ENCODE measurements at regions of chr15 and their contacts with region 1.

Region 1: DNA sequence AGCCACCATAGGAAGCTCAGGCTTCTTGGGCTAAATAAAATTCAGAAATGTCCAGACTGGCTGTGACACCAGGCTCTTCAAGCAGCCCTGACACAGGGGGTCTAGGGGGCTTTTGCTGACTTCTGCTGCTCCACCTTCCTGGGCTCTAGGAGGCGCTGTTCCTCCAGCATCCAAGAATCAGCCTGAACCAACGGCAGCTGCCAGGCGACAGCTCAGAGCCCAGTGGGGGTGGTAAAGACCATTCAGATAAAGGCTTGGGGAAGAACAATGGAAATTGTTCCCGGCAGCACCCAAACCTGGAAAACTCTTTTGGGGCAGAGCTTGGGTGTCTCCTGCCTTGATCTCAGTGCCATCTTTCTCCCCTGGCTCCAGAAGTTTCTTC is 21.6 kb upstream of the PSTPIP1 start:
- DNase-seq: peak; percentile 54 to 85
- H3K4me3 ChIP-seq: no peak overlapping the region; a peak in 1 of 8 replicates
- H3K27ac ChIP-seq: no peak overlapping the region
- H3K4me1 ChIP-seq: peaks cover 0 to 2% (median 0%) of the 10 kb centered on the region in 4 experiments; a peak in 3 of 7 replicates
- H3K27me3 ChIP-seq: no peaks in the 10 kb centered on the region; a peak in 1 of 7 replicates
- CTCF ChIP-seq: peak; percentile 83 to 87 (median 87)
- EP300 ChIP-seq: peak in 1 of 2 experiments; percentile 69; a peak in 1 of 3 replicates
- POLR2A ChIP-seq: no peak
- RAD21 ChIP-seq: peak; percentile 89 to 91

Region 2: GRCh38 chr15:76983590-76984375 is 10.4 kb after region 1 on chr15:
- CTCF ChIA-PET with region 1: interaction called, 10 read pairs
- POLR2A ChIA-PET with region 1: no interaction called
- DNase-seq: no peak
- H3K4me3 ChIP-seq: no peak overlapping the region
- H3K27ac ChIP-seq: no peak overlapping the region
- H3K4me1 ChIP-seq: peaks cover 0 to under 1% (median 0%) of the 10 kb centered on the region in 4 experiments; a peak in 1 of 7 replicates
- H3K27me3 ChIP-seq: no peaks in the 10 kb centered on the region
- CTCF ChIP-seq: no peak
- EP300 ChIP-seq: no peak
- POLR2A ChIP-seq: no peak
- RAD21 ChIP-seq: no peak

Region 3: GRCh38 chr15:76994971-76995945 is 21.9 kb after region 1 on chr15 and contains the start of gene PSTPIP1:
- CTCF ChIA-PET with region 1: interaction called, 43 read pairs
- POLR2A ChIA-PET with region 1: no interaction called
- DNase-seq: no peak
- H3K4me3 ChIP-seq: no peak within 1 kb of the TSS
- H3K27ac ChIP-seq: no peak within 1 kb of the TSS
- H3K4me1 ChIP-seq: no peaks in the 10 kb centered on the region; a peak in 1 of 7 replicates
- H3K27me3 ChIP-seq: no peaks in the 10 kb centered on the region; a peak in 1 of 7 replicates
- CTCF ChIP-seq: no peak
- EP300 ChIP-seq: no peak
- POLR2A ChIP-seq: no peak
- RAD21 ChIP-seq: no peak
- total RNA-seq, gene PSTPIP1: 0.63 and 1.8 TPM in 2 replicates

Region 4: GRCh38 chr15:77034695-77035489 is 61.5 kb after region 1 on chr15:
- CTCF ChIA-PET with region 1: interaction called, 13 read pairs
- POLR2A ChIA-PET with region 1: no interaction called
- DNase-seq: peak in 1 of 2 experiments; percentile 91
- H3K4me3 ChIP-seq: no peak overlapping the region
- H3K27ac ChIP-seq: no peak overlapping the region
- H3K4me1 ChIP-seq: peaks cover 0 to 21% (median 13%) of the 10 kb centered on the region in 4 experiments; a peak in 5 of 7 replicates
- H3K27me3 ChIP-seq: no peaks in the 10 kb centered on the region; a peak in 1 of 7 replicates
- CTCF ChIP-seq: peak in 2 of 3 experiments; percentile 81 to 84; a peak in 3 of 4 replicates
- EP300 ChIP-seq: no peak
- POLR2A ChIP-seq: no peak
- RAD21 ChIP-seq: peak; percentile 52 to 67